Gastrocnemius medialis (tissue), 4 donors: ENCODE measurements at regions of chr14 and their contacts with region 1.

Region 1: DNA sequence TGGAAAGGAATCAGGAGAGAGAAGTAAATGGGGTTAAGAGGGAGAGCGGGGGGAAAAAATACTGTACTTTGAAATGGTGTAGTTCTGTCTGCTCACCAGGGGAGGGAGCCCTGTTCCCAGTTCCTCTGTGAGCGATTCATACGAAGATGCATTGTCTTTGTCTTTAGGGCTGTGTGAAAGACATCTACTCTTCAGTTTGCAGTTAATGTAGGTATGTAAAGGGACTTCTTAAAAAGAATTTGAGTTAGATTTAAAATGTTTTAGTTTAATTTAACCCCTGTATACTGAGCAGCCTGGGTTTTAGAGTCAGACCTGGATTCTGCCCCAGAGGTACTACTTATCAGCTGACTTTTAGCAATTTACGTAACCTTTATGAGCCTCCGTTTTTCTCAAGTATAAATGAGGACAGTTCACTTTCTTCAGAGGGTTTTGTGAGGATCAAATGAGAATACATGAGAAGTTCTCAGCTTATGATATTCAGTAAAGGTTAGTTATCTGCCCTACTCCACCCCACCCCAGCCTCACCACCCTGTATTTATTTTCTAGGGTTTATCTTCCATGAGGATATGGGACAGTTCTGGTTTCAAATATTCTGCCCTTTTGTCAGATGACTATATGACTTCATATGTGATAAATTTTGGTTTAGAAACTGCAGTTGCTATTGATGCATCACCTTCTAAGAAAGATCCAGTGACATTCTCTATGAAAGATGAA is 82.5 kb upstream of the EVL start:
- DNase-seq: peak; percentile 24 to 32
- ATAC-seq: peak; percentile 87 to 91
- H3K4me3 ChIP-seq: no peak overlapping the region
- H3K27ac ChIP-seq: no peak overlapping the region
- H3K4me1 ChIP-seq: no peaks in the 10 kb centered on the region
- H3K27me3 ChIP-seq: no peaks in the 10 kb centered on the region
- CTCF ChIP-seq: peak; percentile 73 to 87 (median 78)
- POLR2A ChIP-seq: no peak

Region 2: GRCh38 chr14:100025111-100025510 is 42.4 kb after region 1 on chr14:
- in situ Hi-C with region 1: no loop called
- intact Hi-C with region 1: loop called (anchors 1 kb)
- DNase-seq: peak; percentile 10 to 21
- ATAC-seq: no peak
- H3K4me3 ChIP-seq: no peak overlapping the region
- H3K27ac ChIP-seq: no peak overlapping the region
- H3K4me1 ChIP-seq: peaks cover 28 to 39% of the 10 kb centered on the region in 2 donors
- H3K27me3 ChIP-seq: no peaks in the 10 kb centered on the region
- CTCF ChIP-seq: peak in 1 of 5 experiments; percentile 9
- POLR2A ChIP-seq: no peak

Region 3: DNA sequence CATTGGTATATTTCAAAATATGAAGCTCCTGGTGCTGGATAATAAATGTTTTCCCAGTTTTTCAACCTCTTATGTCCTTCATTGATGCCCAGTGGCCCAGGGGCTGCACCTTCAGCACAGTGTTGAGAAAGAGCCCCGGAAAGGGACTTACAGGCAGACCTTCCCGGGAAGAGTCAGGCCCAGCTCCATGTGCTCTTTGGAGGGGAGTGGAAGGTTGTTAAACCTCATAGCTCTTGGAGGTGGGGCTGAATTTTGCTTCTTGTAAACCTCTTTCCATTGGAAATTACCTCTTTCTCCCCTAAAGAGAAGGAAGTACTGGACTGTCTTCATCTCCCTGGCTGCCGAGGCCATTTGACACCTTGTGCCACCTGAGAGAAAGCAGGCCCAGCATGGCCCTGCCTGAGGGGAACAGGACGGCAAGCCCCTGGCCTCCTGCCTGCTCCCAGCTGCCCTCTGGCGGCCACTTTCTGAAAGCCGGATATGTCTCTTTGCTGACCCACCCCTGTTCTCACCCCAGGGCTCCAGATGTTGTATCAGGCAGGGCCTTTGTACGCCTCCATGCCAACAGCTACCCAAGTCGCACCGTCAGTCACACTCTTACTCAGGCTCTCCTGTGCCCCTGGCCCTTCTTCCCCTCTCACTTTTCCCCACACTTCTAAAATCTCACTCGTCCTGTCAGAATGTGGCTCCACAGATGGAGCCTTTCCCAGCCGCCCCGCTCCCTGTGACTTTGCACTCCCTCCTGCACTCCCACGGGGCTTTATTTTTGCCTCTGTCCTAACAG is 125.5 kb after region 1 on chr14:
- in situ Hi-C with region 1: loop called (anchors 5 to 10 kb)
- intact Hi-C with region 1: loop called (anchors 1 kb)
- DNase-seq: peak; percentile 44 to 70
- ATAC-seq: peak; percentile 72 to 93
- H3K4me3 ChIP-seq: no peak overlapping the region
- H3K27ac ChIP-seq: peak overlapping the region in 1 of 4 donors; percentile 28
- H3K4me1 ChIP-seq: peaks cover 9 to 39% of the 10 kb centered on the region in 2 donors
- H3K27me3 ChIP-seq: no peaks in the 10 kb centered on the region
- CTCF ChIP-seq: peak; percentile 65 to 87 (median 84)
- POLR2A ChIP-seq: no peak

Region 4: GRCh38 chr14:100114109-100114765 is 131.5 kb after region 1 on chr14:
- in situ Hi-C with region 1: loop called in 3 of 4 experiments (anchors 5 to 10 kb)
- intact Hi-C with region 1: no loop called
- DNase-seq: no peak
- ATAC-seq: no peak
- H3K4me3 ChIP-seq: no peak overlapping the region
- H3K27ac ChIP-seq: no peak overlapping the region
- H3K4me1 ChIP-seq: no peaks in the 10 kb centered on the region
- H3K27me3 ChIP-seq: no peaks in the 10 kb centered on the region
- CTCF ChIP-seq: no peak
- POLR2A ChIP-seq: no peak

Region 5: DNA sequence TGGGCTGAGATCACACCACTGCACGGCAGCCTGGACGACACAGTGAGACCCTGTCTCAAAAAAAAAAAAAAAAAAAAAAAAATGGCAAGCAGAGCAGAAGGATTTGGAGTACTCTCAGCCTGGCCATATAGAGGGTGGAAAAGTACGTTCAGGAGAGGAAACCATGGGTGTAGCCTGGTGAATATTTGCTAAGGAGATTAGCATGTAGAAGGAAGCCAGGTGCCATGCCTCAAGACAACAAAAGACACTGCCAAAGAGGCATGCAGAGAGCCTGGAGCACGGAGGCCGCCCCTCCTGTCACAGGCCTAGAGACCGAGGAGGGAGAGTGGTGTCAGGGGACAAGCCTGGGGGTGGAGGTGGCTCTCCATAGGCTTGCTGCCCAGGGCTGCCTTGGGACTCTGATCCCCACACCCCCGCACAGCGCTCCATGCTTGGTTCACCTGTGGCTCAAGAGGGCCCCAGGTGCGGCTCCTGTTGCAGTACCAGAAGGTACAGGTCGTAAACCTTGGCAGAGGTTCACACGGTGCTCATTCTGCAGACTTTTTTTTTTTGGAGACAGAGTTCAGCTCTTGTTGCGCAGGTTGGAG is 204.6 kb after region 1 on chr14:
- in situ Hi-C with region 1: loop called (anchors 5 to 25 kb)
- intact Hi-C with region 1: loop called (anchors 1 kb)
- DNase-seq: no peak
- ATAC-seq: no peak
- H3K4me3 ChIP-seq: no peak overlapping the region
- H3K27ac ChIP-seq: no peak overlapping the region
- H3K4me1 ChIP-seq: peaks cover 3 to 6% of the 10 kb centered on the region in 2 donors
- H3K27me3 ChIP-seq: no peaks in the 10 kb centered on the region
- CTCF ChIP-seq: no peak
- POLR2A ChIP-seq: no peak

Region 6: GRCh38 chr14:100192672-100193416 is 210.2 kb after region 1 on chr14:
- in situ Hi-C with region 1: loop called (anchors 5 to 25 kb)
- intact Hi-C with region 1: loop called (anchors 1 kb)
- DNase-seq: peak; percentile 98 to 99
- ATAC-seq: peak; percentile 96 to 98
- H3K4me3 ChIP-seq: peak overlapping the region; percentile 54 to 67 (median 60)
- H3K27ac ChIP-seq: peak overlapping the region; percentile 82 to 92 (median 84)
- H3K4me1 ChIP-seq: peaks cover 5 to 9% of the 10 kb centered on the region in 2 donors
- H3K27me3 ChIP-seq: no peaks in the 10 kb centered on the region
- CTCF ChIP-seq: peak; percentile 56 to 96 (median 92)
- POLR2A ChIP-seq: peak in 1 of 2 donors; percentile 61

Region 7: DNA sequence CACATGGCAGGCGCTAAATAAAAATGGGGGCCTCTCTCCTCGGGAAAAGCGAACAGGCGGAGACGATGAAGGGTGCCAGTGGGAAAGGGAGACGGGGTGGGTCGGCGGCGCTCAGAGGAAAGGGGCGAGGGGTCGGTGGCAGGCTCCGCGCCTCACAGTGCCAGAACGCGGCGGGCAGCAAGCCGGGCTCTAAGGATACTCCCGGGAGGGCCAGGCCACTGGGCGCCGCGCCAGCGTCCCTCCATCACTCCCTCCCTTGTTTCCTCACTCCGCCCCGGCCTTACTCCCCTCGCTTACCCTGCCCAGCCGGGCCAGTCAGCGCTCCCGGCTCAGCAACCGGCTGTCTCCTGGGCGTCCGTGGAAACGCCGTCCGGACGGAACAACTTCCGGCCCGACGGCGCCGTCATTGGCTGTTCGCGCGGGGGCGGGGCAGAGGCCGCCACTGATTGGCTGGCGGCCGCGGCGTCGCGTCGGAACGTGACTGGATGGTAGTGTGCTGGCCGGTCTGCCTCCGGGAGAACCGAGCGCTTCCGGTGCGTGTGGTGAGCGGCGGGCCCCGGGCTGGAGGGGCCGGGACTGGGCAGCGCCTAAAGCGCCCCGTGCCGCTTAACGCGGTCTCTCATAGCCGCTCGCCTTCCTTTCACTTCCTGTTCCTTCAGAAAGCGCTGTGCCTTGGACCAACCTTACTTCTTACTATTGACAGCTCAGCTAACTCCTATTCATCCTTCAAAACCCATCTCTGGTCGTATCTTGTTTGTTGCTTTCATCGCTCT is 393.5 kb after region 1 on chr14:
- in situ Hi-C with region 1: loop called in 1 of 4 experiments (anchors 25 kb)
- intact Hi-C with region 1: loop called (anchors 5 kb)
- DNase-seq: peak; percentile 85 to 92
- ATAC-seq: peak; percentile 86 to 90
- H3K4me3 ChIP-seq: peak within 1 kb of the TSS; percentile 73 to 90 (median 85)
- H3K27ac ChIP-seq: peak within 1 kb of the TSS; percentile 80 to 88 (median 86)
- H3K4me1 ChIP-seq: peaks cover 20 to 22% of the 10 kb centered on the region in 2 donors
- H3K27me3 ChIP-seq: no peaks in the 10 kb centered on the region
- CTCF ChIP-seq: no peak
- POLR2A ChIP-seq: peak; percentile 78 to 79